Psoas muscle (tissue), 8 donors: ENCODE measurements at regions of chrX and their contacts with region 1.

Region 1: DNA sequence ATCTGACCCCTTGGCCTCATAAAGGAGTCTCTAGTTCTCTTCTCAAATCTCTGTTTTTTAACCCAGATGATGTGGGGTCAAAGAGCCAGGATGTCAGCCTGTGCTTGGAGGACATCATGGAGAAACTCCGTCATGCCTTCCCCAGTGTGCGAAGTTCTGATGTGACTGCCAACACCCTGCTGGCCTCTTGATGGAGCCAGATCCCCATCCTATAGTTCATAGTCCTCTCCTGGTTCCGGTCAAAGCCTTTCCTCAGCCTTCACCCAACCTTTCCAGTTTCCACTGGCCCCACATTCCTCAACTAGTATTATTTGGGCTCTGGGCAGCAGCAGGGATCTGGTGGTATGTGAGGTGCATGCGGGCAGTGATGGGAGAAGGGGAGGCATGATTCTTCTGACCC is 30.7 kb downstream of the TAF7L start:
- DNase-seq: no peak
- ATAC-seq: no peak
- H3K4me3 ChIP-seq: no peak overlapping the region
- H3K27ac ChIP-seq: no peak overlapping the region
- H3K4me1 ChIP-seq: no peaks in the 10 kb centered on the region
- H3K27me3 ChIP-seq: peaks cover 0 to 5% (median 0%) of the 10 kb centered on the region in 3 donors
- CTCF ChIP-seq: no peak

Region 2: DNA sequence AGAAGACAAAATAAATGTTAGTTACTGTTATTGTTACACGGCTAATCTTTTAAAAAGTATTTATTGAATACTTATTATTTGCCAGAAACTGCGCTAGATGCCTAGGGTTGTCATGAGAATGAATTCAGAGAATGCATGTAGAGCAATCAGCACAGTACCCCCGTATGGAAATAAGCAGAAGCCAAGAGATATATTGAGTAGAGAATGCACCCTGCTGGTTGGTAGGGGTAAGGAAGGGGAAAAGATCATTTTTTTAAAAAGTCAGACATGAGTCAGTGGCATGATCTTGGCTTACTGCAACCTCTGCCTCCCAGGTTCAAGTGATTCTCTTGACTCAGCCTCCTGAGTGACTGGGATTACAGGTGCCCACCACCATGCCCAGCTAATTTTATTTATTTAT is 54.0 kb before region 1 on chrX:
- intact Hi-C with region 1: loop called in 1 of 2 experiments (anchors 10 kb)
- DNase-seq: no peak
- ATAC-seq: no peak
- H3K4me3 ChIP-seq: no peak overlapping the region
- H3K27ac ChIP-seq: no peak overlapping the region
- H3K4me1 ChIP-seq: no peaks in the 10 kb centered on the region
- H3K27me3 ChIP-seq: peaks cover 0 to 3% (median 0%) of the 10 kb centered on the region in 3 donors
- CTCF ChIP-seq: no peak

Region 3: DNA sequence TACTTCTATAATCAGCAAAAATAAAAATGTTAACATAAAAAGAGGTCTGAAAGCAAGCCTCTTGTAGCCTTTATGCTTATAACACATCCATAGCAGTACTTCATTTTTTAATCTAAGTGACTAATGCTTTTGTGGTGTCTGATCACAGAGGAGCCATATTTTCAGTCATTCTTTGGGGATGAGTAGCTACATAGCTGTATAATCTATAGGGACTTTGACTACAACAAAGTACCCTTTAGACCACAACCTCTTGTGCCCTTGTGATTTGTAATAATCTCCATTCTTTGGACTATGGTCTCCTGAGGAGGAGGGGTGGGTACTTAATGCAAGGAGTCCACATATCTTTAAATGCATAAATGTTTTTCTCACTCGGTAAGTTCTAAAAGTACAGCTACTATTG is 31.3 kb before region 1 on chrX:
- intact Hi-C with region 1: no loop called
- DNase-seq: no peak
- ATAC-seq: no peak
- H3K4me3 ChIP-seq: no peak overlapping the region
- H3K27ac ChIP-seq: no peak overlapping the region
- H3K4me1 ChIP-seq: no peaks in the 10 kb centered on the region
- H3K27me3 ChIP-seq: peaks cover 0 to 22% (median 0%) of the 10 kb centered on the region in 3 donors
- CTCF ChIP-seq: no peak